ENCODE measurements at regions of chr10 and their contacts with region 1.

Region 1: GRCh38 chr10:131786756-131787605 is 113.8 kb upstream of the PPP2R2D start:
- DNase-seq: no peak
- ATAC-seq: no peak
- H3K4me3 ChIP-seq: no peak overlapping the region
- H3K27ac ChIP-seq: no peak overlapping the region
- H3K4me1 ChIP-seq: no peaks in the 10 kb centered on the region
- H3K27me3 ChIP-seq: peaks cover 0 to 28% (median under 1%) of the 10 kb centered on the region in 9 donors
- CTCF ChIP-seq: peak; percentile 50 to 78 (median 66)
- POLR2A ChIP-seq: no peak

Region 2: DNA sequence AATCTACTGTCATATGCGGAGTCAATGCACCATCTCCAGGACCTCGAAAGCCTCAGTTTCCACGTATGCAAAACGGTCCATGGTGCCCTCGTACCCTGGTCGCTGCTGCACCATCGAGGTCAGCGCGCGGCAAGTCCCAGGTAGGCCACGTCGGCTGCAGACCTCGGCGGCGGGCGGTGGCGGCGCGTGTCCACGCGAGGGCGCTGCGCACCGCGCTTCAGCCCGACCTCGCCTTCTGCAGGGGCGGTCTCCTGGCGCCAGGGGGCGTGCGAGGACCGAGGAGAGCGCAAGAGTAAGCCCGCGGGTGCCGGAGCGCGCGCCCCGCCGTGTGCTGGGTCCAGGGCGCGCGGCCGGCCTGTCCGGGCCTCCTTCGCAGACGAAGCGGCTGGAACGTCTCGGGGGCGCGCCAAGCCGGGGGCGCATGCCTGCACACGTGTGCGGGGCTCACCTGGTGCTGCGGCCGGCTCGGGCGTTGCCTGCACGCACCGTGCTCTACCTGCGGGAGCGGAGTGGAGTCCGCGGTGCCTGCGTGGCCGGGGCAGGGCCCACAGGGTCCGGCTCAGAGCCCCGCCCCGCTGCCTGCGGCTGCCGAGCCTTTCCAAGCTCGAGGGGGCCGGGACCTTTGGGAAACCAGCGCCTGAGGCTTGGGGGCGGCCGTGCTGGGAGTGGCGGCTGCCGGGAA is 1596.8 kb before region 1 on chr10:
- intact Hi-C with region 1: loop called in 8 of 10 experiments (anchors 2 to 10 kb)
- DNase-seq: peak; percentile 83 to 94 (median 89)
- ATAC-seq: peak; percentile 56 to 91 (median 84)
- H3K4me3 ChIP-seq: peak overlapping the region; percentile 16 to 82 (median 56)
- H3K27ac ChIP-seq: no peak overlapping the region
- H3K4me1 ChIP-seq: peaks cover 0 to 29% (median 6%) of the 10 kb centered on the region in 12 donors
- H3K27me3 ChIP-seq: peaks cover 0 to 10% (median 0%) of the 10 kb centered on the region in 9 donors
- CTCF ChIP-seq: peak; percentile 100
- POLR2A ChIP-seq: no peak

Region 3: GRCh38 chr10:130254662-130255061 is 1532.3 kb before region 1 on chr10:
- intact Hi-C with region 1: loop called in 1 of 10 experiments (anchors 10 kb)
- DNase-seq: no peak
- ATAC-seq: no peak
- H3K4me3 ChIP-seq: no peak overlapping the region
- H3K27ac ChIP-seq: no peak overlapping the region
- H3K4me1 ChIP-seq: no peaks in the 10 kb centered on the region
- H3K27me3 ChIP-seq: no peaks in the 10 kb centered on the region
- CTCF ChIP-seq: peak in 1 of 12 donors; percentile 58
- POLR2A ChIP-seq: no peak

Region 4: DNA sequence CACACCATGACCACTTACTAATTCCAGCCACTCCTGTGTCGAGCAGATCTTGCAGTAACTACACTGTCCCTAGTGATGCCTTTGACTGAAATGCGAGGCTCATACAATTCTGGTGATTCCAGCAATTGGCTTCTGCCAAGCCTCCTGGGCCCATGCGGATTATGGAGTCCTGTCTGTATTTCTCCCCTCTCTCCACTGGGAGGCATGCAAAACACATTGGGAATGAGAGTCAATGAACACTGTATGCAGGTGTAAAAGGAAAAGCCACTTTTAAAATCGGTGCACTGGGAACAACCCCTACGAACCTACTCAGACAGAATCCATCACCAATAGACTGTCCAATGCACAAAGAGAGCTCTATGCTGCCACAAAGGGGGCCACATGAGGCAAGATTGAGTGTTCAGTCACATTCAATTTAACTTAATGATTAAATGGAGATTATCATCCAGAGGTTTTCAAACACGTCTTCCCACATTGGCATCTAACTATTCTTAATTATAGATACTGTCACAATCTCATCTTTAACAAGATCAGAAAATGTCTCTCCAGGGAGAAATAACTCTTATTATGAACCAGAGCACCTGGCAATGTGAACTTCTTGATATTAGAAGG is 1100.2 kb before region 1 on chr10:
- intact Hi-C with region 1: loop called in 6 of 10 experiments (anchors 2 to 10 kb)
- DNase-seq: no peak
- ATAC-seq: peak in 1 of 4 donors; percentile 46
- H3K4me3 ChIP-seq: no peak overlapping the region
- H3K27ac ChIP-seq: no peak overlapping the region
- H3K4me1 ChIP-seq: no peaks in the 10 kb centered on the region
- H3K27me3 ChIP-seq: peaks cover 0 to 2% (median 0%) of the 10 kb centered on the region in 9 donors
- CTCF ChIP-seq: peak in 9 of 12 donors; percentile 10 to 40 (median 33)
- POLR2A ChIP-seq: no peak

Region 5: GRCh38 chr10:131453594-131454355 is 333.2 kb before region 1 on chr10:
- intact Hi-C with region 1: loop called in 6 of 10 experiments (anchors 5 to 10 kb)
- DNase-seq: peak in 4 of 5 donors; percentile 36 to 57 (median 53)
- ATAC-seq: peak in 3 of 4 donors; percentile 65 to 69 (median 67)
- H3K4me3 ChIP-seq: peak overlapping the region in 10 of 12 donors; percentile 6 to 53 (median 35)
- H3K27ac ChIP-seq: no peak overlapping the region
- H3K4me1 ChIP-seq: peaks cover 0 to 7% (median 0%) of the 10 kb centered on the region in 12 donors
- H3K27me3 ChIP-seq: peaks cover 0 to 50% (median 26%) of the 10 kb centered on the region in 9 donors
- CTCF ChIP-seq: peak; percentile 74 to 91 (median 84)
- POLR2A ChIP-seq: no peak